PC-3 (cell line): ENCODE measurements at regions of chr10 and their contacts with region 1.

Region 1: GRCh38 chr10:100373298-100374136 is 26.5 kb downstream of the SCD start:
- DNase-seq: peak; percentile 94
- ATAC-seq: peak; percentile 76
- H3K4me3 ChIP-seq: peak overlapping the region; percentile 92
- H3K27ac ChIP-seq: peak overlapping the region; percentile 100
- H3K4me1 ChIP-seq: peaks cover 37% of the 10 kb centered on the region
- H3K27me3 ChIP-seq: no peaks in the 10 kb centered on the region
- CTCF ChIP-seq: no peak

Region 2: DNA sequence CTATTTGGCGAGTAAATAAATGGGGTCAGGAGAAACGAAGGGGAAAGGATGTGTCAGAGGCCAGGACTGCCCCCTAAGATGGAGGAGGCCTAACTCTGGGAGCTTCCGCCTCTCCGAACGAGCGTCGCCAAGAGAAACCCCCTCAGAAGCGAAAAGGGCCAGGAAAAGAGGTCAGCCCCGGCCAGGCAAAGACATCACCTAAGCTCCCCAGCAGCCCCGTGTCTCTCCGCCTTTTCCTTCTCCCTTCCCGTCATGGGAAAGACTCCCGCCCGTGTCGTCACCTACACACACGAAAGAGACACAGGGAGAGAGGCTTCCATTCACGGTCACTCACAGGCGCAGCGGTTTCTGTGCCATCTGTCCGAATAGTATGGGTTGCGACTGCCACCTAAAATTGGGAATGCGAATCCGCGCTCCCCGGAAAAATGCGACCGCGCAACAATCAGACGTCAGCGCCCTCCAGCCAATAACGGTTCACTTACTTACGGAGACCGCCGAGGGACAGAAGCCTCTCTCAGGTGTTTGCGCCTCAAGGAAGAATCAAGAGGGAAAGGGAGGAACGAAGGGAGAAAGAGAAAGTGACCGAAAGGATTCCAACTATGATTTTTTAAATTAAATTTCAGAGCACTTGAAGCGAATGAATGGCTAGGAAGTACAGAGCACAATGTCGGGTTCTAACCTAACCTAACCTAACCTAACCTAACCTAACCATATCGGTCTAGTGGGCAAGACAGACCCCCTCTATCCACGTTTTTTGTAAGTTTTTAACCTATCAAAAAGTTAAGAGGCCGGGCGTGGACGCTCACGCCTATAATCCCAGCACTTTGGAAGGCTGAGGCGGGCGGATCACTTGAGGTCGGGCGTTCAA is 106.0 kb before region 1 on chr10 and contains the start of gene CWF19L1:
- CTCF ChIA-PET with region 1: no interaction called
- POLR2A ChIA-PET with region 1: no interaction called
- intact Hi-C with region 1: no loop called
- DNase-seq: peak; percentile 77
- ATAC-seq: peak; percentile 92
- H3K4me3 ChIP-seq: peak within 1 kb of the TSS; percentile 87
- H3K27ac ChIP-seq: peak within 1 kb of the TSS; percentile 47
- H3K4me1 ChIP-seq: no peaks in the 10 kb centered on the region
- H3K27me3 ChIP-seq: no peaks in the 10 kb centered on the region
- CTCF ChIP-seq: no peak
- total RNA-seq, gene CWF19L1: 30.4 and 31.4 TPM in 2 replicates

Region 3: GRCh38 chr10:100286051-100287033 is 87.2 kb before region 1 on chr10 and contains the start of gene BLOC1S2:
- CTCF ChIA-PET with region 1: no interaction called
- POLR2A ChIA-PET with region 1: no interaction called
- intact Hi-C with region 1: loop called (anchors 5 kb)
- DNase-seq: peak; percentile 83
- ATAC-seq: peak; percentile 94
- H3K4me3 ChIP-seq: peak within 1 kb of the TSS; percentile 87
- H3K27ac ChIP-seq: peak within 1 kb of the TSS; percentile 73
- H3K4me1 ChIP-seq: peaks cover 15% of the 10 kb centered on the region
- H3K27me3 ChIP-seq: no peaks in the 10 kb centered on the region
- CTCF ChIP-seq: no peak
- total RNA-seq, gene BLOC1S2: 33.7 and 46.4 TPM in 2 replicates